GM12878 (cell line): ENCODE measurements at regions of chr19 and their contacts with region 1.

Region 1: GRCh38 chr19:11286312-11286974 is 9.5 kb upstream of the TSPAN16 start:
- DNase-seq: no peak
- ATAC-seq: peak; percentile 46
- H3K4me3 ChIP-seq: no peak overlapping the region
- H3K27ac ChIP-seq: no peak overlapping the region
- H3K4me1 ChIP-seq: no peaks in the 10 kb centered on the region
- H3K27me3 ChIP-seq: no peaks in the 10 kb centered on the region
- CTCF ChIP-seq: peak in 1 of 3 experiments; percentile 12; a peak in 1 of 6 replicates
- EP300 ChIP-seq: no peak
- POLR2A ChIP-seq: no peak
- RAD21 ChIP-seq: no peak

Region 2: GRCh38 chr19:11155373-11156120 is 130.9 kb before region 1 on chr19 and contains the start of gene SPC24:
- CTCF ChIA-PET with region 1: no interaction called
- POLR2A ChIA-PET with region 1: no interaction called
- RAD21 ChIA-PET with region 1: no interaction called
- SMC1A ChIA-PET with region 1: no interaction called
- in situ Hi-C with region 1: no loop called
- intact Hi-C with region 1: no loop called
- DNase-seq: peak; percentile 94
- ATAC-seq: peak; percentile 99
- H3K4me3 ChIP-seq: peak within 1 kb of the TSS; percentile 95
- H3K27ac ChIP-seq: peak within 1 kb of the TSS; percentile 91
- H3K4me1 ChIP-seq: no peaks in the 10 kb centered on the region; the same call in 1 of the 2 replicates
- H3K27me3 ChIP-seq: no peaks in the 10 kb centered on the region
- CTCF ChIP-seq: 0 out of 6 replicates have a peak, but pooled peaks of 1 of the 3 experiments have one; percentile 3
- EP300 ChIP-seq: no peak
- POLR2A ChIP-seq: peak; percentile 94
- RAD21 ChIP-seq: no peak
- polyA plus RNA-seq, gene SPC24: 9.4 to 18.4 TPM

Region 3: DNA sequence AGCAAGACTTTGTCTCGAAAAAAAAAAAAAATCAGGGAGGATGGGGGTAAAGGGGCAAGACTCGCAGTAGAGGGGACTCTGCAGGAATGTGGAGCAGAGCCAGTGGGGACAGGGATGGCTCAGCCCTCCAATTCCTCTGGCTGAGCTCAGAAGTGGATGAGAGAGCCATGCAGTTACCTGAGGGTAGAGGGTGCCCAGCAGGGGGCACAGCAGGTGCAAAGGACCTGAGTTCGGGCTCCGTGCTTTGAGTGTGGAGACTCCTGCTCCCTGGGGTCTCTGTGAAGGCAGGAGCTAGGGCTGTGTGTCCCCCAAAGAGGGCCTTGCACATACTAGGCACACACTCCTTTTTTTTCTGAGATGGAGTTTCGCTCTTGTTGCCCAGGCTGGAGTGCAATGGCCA is 31.8 kb before region 1 on chr19:
- CTCF ChIA-PET with region 1: interaction called, 6 read pairs
- POLR2A ChIA-PET with region 1: interaction called, 10 read pairs
- RAD21 ChIA-PET with region 1: no interaction called
- SMC1A ChIA-PET with region 1: no interaction called
- in situ Hi-C with region 1: no loop called
- intact Hi-C with region 1: no loop called
- DNase-seq: no peak
- ATAC-seq: no peak; the same call in 2 of the 3 replicates
- H3K4me3 ChIP-seq: no peak overlapping the region
- H3K27ac ChIP-seq: no peak overlapping the region
- H3K4me1 ChIP-seq: no peaks in the 10 kb centered on the region
- H3K27me3 ChIP-seq: no peaks in the 10 kb centered on the region
- CTCF ChIP-seq: peak; percentile 7 to 24 (median 23); a peak in 2 of 6 replicates
- EP300 ChIP-seq: no peak
- POLR2A ChIP-seq: no peak
- RAD21 ChIP-seq: no peak